Naive thymus-derived CD4-positive, alpha-beta T cell (primary cell): ENCODE measurements at regions of chr13 and their contacts with region 1.

Region 1: DNA sequence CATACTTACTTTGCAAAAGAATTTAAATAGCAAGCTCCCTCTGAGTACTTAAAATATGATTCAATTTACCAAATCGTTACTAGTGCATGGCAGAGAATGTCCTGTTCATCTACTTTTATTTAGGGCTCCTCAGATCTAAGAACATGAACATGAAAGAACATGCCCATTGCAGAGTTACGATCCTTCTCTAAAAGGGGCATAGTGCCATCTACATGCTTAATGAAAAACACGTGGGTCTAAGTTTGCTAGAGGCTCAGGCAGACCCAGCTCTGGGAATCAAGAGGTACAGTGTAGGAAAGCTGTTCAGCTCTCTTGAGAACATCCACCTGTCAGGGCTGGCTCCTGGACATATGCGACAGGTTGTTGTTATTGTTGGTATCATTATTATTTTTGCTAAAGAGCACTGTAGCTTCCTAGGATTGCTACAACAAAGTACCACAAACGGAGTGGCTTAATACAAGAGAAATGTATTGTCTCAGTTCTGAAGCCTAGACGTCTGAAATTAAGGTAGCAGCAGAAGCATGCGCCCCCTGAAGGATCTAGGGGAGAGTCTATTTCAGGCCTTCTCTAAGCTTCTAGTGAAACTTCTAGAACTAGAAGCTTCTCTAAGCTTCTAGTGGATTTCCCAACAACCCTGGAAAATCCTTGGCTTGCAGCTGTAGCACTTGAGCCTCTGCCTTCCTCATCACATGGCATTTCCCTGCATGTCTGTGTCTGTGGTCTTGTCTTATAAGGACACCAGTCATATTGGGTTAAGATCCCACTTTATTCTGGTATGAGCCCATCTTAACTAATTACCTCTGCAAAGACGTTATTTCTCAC is 133.9 kb downstream of the DCT start:
- DNase-seq: peak in 7 of 9 donors; percentile 23 to 63 (median 48)
- ATAC-seq: peak; percentile 73
- H3K4me3 ChIP-seq: no peak overlapping the region
- H3K4me3 Mint-ChIP-seq: peak overlapping the region in 1 of 10 donors; percentile 40
- H3K27ac ChIP-seq: no peak overlapping the region
- H3K27ac Mint-ChIP-seq: no peak overlapping the region
- H3K4me1 ChIP-seq: no peaks in the 10 kb centered on the region
- H3K4me1 Mint-ChIP-seq: peaks cover 4 to 18% (median 8%) of the 10 kb centered on the region in 7 donors
- H3K27me3 ChIP-seq: no peaks in the 10 kb centered on the region
- H3K27me3 Mint-ChIP-seq: peaks cover 0 to 12% (median 0%) of the 10 kb centered on the region in 5 donors

Region 2: GRCh38 chr13:93646245-93646644 is 699.3 kb before region 1 on chr13:
- CTCF ChIA-PET with region 1: no interaction called
- POLR2A ChIA-PET with region 1: no interaction called
- intact Hi-C with region 1: loop called in 1 of 2 experiments (anchors 10 kb)
- DNase-seq: no peak
- ATAC-seq: no peak
- H3K4me3 ChIP-seq: no peak overlapping the region
- H3K4me3 Mint-ChIP-seq: no peak overlapping the region
- H3K27ac ChIP-seq: no peak overlapping the region
- H3K27ac Mint-ChIP-seq: no peak overlapping the region
- H3K4me1 ChIP-seq: no peaks in the 10 kb centered on the region
- H3K4me1 Mint-ChIP-seq: no peaks in the 10 kb centered on the region
- H3K27me3 ChIP-seq: no peaks in the 10 kb centered on the region
- H3K27me3 Mint-ChIP-seq: peaks cover 0 to 5% (median 0%) of the 10 kb centered on the region in 5 donors

Region 3: DNA sequence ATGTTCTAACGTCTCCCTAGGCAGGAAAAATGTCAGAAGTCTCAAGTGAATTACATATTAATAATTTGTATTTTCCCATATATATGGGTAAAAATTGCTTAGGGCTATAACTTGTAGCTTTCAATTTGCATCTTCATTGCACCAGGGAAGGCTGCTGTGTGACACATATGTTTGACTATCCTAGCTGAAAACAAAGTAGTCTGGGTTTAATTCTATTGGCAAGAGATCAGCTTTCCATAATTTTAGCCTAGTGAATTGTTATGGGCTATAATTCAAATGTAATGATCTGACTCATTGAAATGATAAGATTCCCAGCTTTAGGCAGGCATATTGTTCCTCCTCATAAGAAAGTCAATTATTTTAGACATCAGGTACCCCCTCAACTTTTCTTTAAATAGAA is 419.2 kb before region 1 on chr13:
- CTCF ChIA-PET with region 1: no interaction called
- POLR2A ChIA-PET with region 1: no interaction called
- intact Hi-C with region 1: loop called in 1 of 2 experiments (anchors 10 kb)
- DNase-seq: no peak
- ATAC-seq: no peak
- H3K4me3 ChIP-seq: no peak overlapping the region
- H3K4me3 Mint-ChIP-seq: no peak overlapping the region
- H3K27ac ChIP-seq: no peak overlapping the region
- H3K27ac Mint-ChIP-seq: no peak overlapping the region
- H3K4me1 ChIP-seq: no peaks in the 10 kb centered on the region
- H3K4me1 Mint-ChIP-seq: no peaks in the 10 kb centered on the region
- H3K27me3 ChIP-seq: no peaks in the 10 kb centered on the region
- H3K27me3 Mint-ChIP-seq: peaks cover 0 to 24% (median 14%) of the 10 kb centered on the region in 5 donors

Region 4: DNA sequence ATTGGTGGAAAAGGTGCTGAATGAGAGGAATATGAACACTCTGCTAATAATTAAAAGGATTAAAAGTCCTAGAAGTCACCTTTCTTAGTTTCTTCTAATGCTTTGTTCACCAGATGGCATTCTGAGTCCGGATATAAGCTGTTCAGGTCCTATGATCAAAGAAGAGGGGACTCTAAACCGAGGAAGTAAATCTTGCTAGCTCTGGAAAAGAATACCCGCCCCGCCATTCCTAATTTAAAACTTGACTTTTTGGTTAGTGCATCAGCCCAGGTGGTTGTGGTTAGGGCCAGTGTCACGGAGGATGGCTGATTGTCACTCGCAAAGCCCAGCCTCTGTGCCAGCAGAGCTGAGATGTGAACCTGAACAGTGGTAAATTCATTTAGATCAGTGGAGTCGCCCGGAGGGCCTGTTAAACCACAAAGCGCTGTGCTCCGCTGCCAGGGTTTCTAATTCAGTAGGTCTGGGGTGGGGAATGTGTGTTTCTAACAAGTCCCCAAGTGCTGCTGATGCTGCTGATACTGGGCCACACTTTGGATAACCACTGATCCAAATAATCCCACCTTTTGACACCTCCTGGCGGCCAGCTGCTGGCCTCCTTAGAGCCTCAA is 291.5 kb before region 1 on chr13:
- CTCF ChIA-PET with region 1: interaction called, 4 read pairs
- POLR2A ChIA-PET with region 1: no interaction called
- intact Hi-C with region 1: loop called in 1 of 2 experiments (anchors 2 kb)
- DNase-seq: no peak
- ATAC-seq: no peak
- H3K4me3 ChIP-seq: no peak overlapping the region
- H3K4me3 Mint-ChIP-seq: no peak overlapping the region
- H3K27ac ChIP-seq: no peak overlapping the region
- H3K27ac Mint-ChIP-seq: no peak overlapping the region
- H3K4me1 ChIP-seq: no peaks in the 10 kb centered on the region
- H3K4me1 Mint-ChIP-seq: no peaks in the 10 kb centered on the region
- H3K27me3 ChIP-seq: no peaks in the 10 kb centered on the region
- H3K27me3 Mint-ChIP-seq: peaks cover 0 to 19% (median 11%) of the 10 kb centered on the region in 5 donors

Region 5: GRCh38 chr13:94112227-94112626 is 233.4 kb before region 1 on chr13:
- CTCF ChIA-PET with region 1: interaction called, 3 read pairs
- POLR2A ChIA-PET with region 1: no interaction called
- intact Hi-C with region 1: loop called in 1 of 2 experiments (anchors 1 kb)
- DNase-seq: no peak
- ATAC-seq: no peak
- H3K4me3 ChIP-seq: no peak overlapping the region
- H3K4me3 Mint-ChIP-seq: no peak overlapping the region
- H3K27ac ChIP-seq: no peak overlapping the region
- H3K27ac Mint-ChIP-seq: no peak overlapping the region
- H3K4me1 ChIP-seq: no peaks in the 10 kb centered on the region
- H3K4me1 Mint-ChIP-seq: peaks cover 0 to 2% (median 0%) of the 10 kb centered on the region in 7 donors
- H3K27me3 ChIP-seq: no peaks in the 10 kb centered on the region
- H3K27me3 Mint-ChIP-seq: peaks cover 0 to 4% (median 4%) of the 10 kb centered on the region in 5 donors

Region 6: GRCh38 chr13:94280349-94280748 is 65.2 kb before region 1 on chr13:
- CTCF ChIA-PET with region 1: no interaction called
- POLR2A ChIA-PET with region 1: no interaction called
- intact Hi-C with region 1: no loop called
- DNase-seq: no peak
- ATAC-seq: no peak
- H3K4me3 ChIP-seq: no peak overlapping the region
- H3K4me3 Mint-ChIP-seq: no peak overlapping the region
- H3K27ac ChIP-seq: no peak overlapping the region
- H3K27ac Mint-ChIP-seq: no peak overlapping the region
- H3K4me1 ChIP-seq: no peaks in the 10 kb centered on the region
- H3K4me1 Mint-ChIP-seq: no peaks in the 10 kb centered on the region
- H3K27me3 ChIP-seq: peaks cover 0 to 3% of the 10 kb centered on the region in 2 donors
- H3K27me3 Mint-ChIP-seq: peaks cover 0 to 20% (median 17%) of the 10 kb centered on the region in 5 donors

Region 7: DNA sequence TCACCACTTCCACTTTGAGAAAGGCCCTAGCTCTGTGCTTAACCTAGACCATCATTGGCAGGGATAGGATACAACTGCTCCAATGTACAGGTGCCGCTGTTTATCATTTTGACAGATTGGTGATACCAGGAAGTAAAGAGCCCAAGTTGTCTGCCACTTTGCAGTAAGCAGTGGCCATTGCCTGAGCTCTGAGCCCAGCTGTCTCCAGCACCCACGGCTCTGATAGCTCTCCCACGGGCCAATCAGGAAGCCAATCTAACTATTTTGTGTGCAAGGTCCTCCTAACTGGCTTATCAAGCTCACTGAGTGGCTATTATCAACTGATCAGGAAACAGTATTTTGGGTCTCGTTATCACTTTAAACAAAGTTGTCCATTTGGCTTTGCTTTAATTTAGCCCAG is 47.2 kb before region 1 on chr13:
- CTCF ChIA-PET with region 1: no interaction called
- POLR2A ChIA-PET with region 1: no interaction called
- intact Hi-C with region 1: no loop called
- DNase-seq: no peak
- ATAC-seq: no peak
- H3K4me3 ChIP-seq: no peak overlapping the region
- H3K4me3 Mint-ChIP-seq: no peak overlapping the region
- H3K27ac ChIP-seq: no peak overlapping the region
- H3K27ac Mint-ChIP-seq: peak overlapping the region in 1 of 9 donors; percentile 10
- H3K4me1 ChIP-seq: no peaks in the 10 kb centered on the region
- H3K4me1 Mint-ChIP-seq: peaks cover 0 to 19% (median 6%) of the 10 kb centered on the region in 7 donors
- H3K27me3 ChIP-seq: peaks cover 0 to 2% of the 10 kb centered on the region in 2 donors
- H3K27me3 Mint-ChIP-seq: peaks cover 0 to 10% (median 0%) of the 10 kb centered on the region in 5 donors

Region 8: DNA sequence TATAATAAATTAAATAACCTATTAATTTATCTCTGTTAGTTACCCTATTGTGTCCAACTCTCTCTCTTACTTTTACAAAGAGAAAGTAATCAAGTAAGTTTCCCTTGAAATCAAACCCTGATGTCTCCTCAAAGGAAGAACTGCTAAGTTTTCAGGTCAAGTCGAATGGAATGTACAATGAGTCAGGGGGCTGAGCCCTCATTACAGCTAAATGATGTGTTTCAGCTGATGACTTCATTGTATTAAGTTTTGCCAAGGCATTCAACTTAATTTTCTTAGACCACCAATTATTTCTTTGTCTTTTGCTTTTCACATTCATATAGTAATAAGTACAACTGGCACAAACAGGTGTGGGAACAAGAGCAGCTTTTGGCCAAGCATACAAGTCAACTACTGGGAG is 188.6 kb after region 1 on chr13:
- CTCF ChIA-PET with region 1: no interaction called
- POLR2A ChIA-PET with region 1: no interaction called
- intact Hi-C with region 1: no loop called
- DNase-seq: no peak
- ATAC-seq: no peak
- H3K4me3 ChIP-seq: no peak overlapping the region
- H3K4me3 Mint-ChIP-seq: no peak overlapping the region
- H3K27ac ChIP-seq: no peak overlapping the region
- H3K27ac Mint-ChIP-seq: no peak overlapping the region
- H3K4me1 ChIP-seq: peaks cover 0 to 12% of the 10 kb centered on the region in 2 donors
- H3K4me1 Mint-ChIP-seq: peaks cover 5 to 35% (median 18%) of the 10 kb centered on the region in 7 donors
- H3K27me3 ChIP-seq: no peaks in the 10 kb centered on the region
- H3K27me3 Mint-ChIP-seq: peaks cover 0 to 8% (median 0%) of the 10 kb centered on the region in 5 donors

Region 9: GRCh38 chr13:94601446-94602431 is 256.2 kb after region 1 on chr13 and contains the start of gene GPR180:
- CTCF ChIA-PET with region 1: no interaction called
- POLR2A ChIA-PET with region 1: no interaction called
- intact Hi-C with region 1: no loop called
- DNase-seq: peak; percentile 67 to 92 (median 88)
- ATAC-seq: peak; percentile 99
- H3K4me3 ChIP-seq: peak within 1 kb of the TSS; percentile 58
- H3K4me3 Mint-ChIP-seq: peak within 1 kb of the TSS; percentile 79 to 90 (median 86)
- H3K27ac ChIP-seq: peak within 1 kb of the TSS; percentile 75
- H3K27ac Mint-ChIP-seq: peak within 1 kb of the TSS; percentile 82 to 90 (median 87)
- H3K4me1 ChIP-seq: peaks cover 0 to 10% of the 10 kb centered on the region in 2 donors
- H3K4me1 Mint-ChIP-seq: peaks cover 16 to 45% (median 32%) of the 10 kb centered on the region in 7 donors
- H3K27me3 ChIP-seq: no peaks in the 10 kb centered on the region
- H3K27me3 Mint-ChIP-seq: no peaks in the 10 kb centered on the region
- total RNA-seq, gene GPR180: 1.8 to 7.0 (median 5.4) TPM